Esophagus muscularis mucosa (tissue), 4 donors: ENCODE measurements at regions of chr5 and their contacts with region 1.

Region 1: GRCh38 chr5:74919487-74919886 is 53.3 kb upstream of the FAM169A start:
- DNase-seq: peak; percentile 81
- H3K4me3 ChIP-seq: no peak overlapping the region
- H3K27ac ChIP-seq: no peak overlapping the region
- H3K4me1 ChIP-seq: no peaks in the 10 kb centered on the region
- H3K27me3 ChIP-seq: no peaks in the 10 kb centered on the region
- CTCF ChIP-seq: peak; percentile 57 to 66 (median 59)
- EP300 ChIP-seq: no peak
- POLR2A ChIP-seq: no peak

Region 2: DNA sequence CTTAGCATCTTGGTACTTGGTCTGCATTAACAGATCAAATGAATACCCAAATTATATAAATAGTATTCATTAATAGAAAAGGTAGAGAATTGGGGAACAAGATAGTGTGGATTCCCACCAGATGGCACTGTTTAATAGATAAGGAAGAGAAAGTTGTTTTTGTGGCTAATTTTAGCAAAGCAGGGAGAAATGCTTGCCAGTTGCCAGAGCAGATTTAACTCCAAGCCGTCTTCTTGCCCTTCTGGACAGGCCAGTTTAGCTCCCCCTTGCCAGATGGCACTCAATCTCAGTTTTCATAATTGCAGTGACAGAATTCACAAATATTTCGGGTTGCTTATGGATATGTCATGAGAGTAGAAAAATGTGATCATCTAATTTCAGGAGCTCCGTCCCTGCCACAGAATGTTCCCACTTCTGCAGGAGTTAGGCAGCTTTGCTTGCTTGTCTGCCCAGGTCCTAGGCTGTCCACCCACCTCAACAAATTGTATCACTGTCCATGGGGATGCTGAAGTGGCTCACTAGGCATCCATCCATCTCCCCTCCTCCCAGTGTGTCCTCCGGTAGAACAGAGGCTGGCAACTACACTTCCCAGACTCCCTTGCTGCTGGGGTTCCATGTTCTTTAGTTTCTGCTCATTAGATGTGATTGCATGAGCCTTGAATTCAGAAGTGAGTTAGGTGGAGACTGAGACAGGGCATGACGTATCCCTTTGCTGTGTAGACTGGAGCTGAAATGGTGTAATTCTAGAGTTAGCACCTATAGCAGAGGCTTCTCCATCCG is 246.3 kb before region 1 on chr5:
- intact Hi-C with region 1: loop called (anchors 5 kb)
- DNase-seq: no peak
- H3K4me3 ChIP-seq: peak overlapping the region; percentile 40 to 54 (median 45)
- H3K27ac ChIP-seq: peak overlapping the region; percentile 48 to 67 (median 66)
- H3K4me1 ChIP-seq: peaks cover 14 to 18% (median 15%) of the 10 kb centered on the region in 4 donors
- H3K27me3 ChIP-seq: no peaks in the 10 kb centered on the region
- CTCF ChIP-seq: peak; percentile 47 to 59 (median 57)
- EP300 ChIP-seq: no peak
- POLR2A ChIP-seq: no peak

Region 3: GRCh38 chr5:74766849-74767578 is 152.5 kb before region 1 on chr5 and contains the starts of genes GFM2 and NSA2:
- intact Hi-C with region 1: loop called (anchors 5 kb)
- DNase-seq: peak; percentile 95
- H3K4me3 ChIP-seq: peak within 1 kb of the TSS; percentile 77 to 87 (median 81)
- H3K27ac ChIP-seq: peak within 1 kb of the TSS; percentile 77 to 87 (median 86)
- H3K4me1 ChIP-seq: peaks cover 24 to 34% (median 31%) of the 10 kb centered on the region in 4 donors
- H3K27me3 ChIP-seq: no peaks in the 10 kb centered on the region
- CTCF ChIP-seq: peak in 1 of 3 experiments; percentile 17
- EP300 ChIP-seq: no peak
- POLR2A ChIP-seq: no peak
- total RNA-seq, gene GFM2: 12.9 to 17.0 (median 14.5) TPM
- total RNA-seq, gene NSA2: 85.2 to 120 (median 110) TPM

Region 4: GRCh38 chr5:74885170-74885569 is 34.3 kb before region 1 on chr5:
- intact Hi-C with region 1: no loop called
- DNase-seq: no peak
- H3K4me3 ChIP-seq: no peak overlapping the region
- H3K27ac ChIP-seq: no peak overlapping the region
- H3K4me1 ChIP-seq: no peaks in the 10 kb centered on the region
- H3K27me3 ChIP-seq: no peaks in the 10 kb centered on the region
- CTCF ChIP-seq: no peak
- EP300 ChIP-seq: no peak
- POLR2A ChIP-seq: no peak